Transverse colon (tissue), 4 donors: ENCODE measurements at regions of chr20 and their contacts with region 1.

Region 1: DNA sequence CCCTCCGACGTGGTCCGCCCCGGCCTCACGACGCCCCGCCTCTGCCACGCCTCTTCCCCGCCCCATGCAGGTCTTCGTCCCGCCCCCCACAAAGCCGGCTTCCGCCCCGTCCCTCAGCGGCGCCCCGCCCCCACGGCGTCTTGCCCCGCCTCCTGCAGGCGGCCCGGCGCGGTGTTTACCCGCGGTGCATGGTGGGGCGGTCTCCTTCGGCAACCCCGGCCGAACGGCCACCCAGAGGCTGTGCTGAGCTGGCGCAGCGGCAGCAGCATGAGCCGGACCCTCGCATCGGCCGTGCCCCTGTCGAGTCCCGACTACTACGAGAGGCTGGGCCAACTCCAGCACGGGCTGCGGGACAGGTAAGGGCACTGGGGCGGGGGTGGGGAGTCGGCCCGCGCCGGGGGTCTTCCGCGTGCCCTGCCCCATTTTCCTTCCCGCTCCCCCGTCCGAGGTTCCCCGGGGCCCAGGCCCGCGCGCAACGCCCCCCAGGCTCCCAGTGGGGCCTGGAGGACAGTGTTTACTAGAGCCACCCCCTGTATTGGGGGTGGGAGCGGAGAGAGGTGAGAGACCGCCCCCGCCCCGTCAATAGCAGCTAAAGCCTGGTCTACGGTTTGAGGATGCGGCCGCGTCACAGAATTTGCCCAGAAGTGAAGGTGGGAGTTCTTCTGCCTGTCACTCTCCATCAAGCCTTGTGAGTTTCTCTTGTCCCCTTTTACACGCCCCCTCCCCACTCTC is at the start of gene KIZ:
- DNase-seq: peak; percentile 99
- H3K4me3 ChIP-seq: peak within 1 kb of the TSS; percentile 66 to 98 (median 91)
- H3K27ac ChIP-seq: peak within 1 kb of the TSS; percentile 87 to 92 (median 88)
- H3K4me1 ChIP-seq: peaks cover 0 to 26% (median 9%) of the 10 kb centered on the region in 4 donors
- H3K27me3 ChIP-seq: no peaks in the 10 kb centered on the region
- CTCF ChIP-seq: peak; percentile 28 to 75 (median 42)
- EP300 ChIP-seq: no peak
- POLR2A ChIP-seq: peak; percentile 82
- total RNA-seq, gene KIZ: 24.3 to 95.9 (median 36.9) TPM

Region 2: DNA sequence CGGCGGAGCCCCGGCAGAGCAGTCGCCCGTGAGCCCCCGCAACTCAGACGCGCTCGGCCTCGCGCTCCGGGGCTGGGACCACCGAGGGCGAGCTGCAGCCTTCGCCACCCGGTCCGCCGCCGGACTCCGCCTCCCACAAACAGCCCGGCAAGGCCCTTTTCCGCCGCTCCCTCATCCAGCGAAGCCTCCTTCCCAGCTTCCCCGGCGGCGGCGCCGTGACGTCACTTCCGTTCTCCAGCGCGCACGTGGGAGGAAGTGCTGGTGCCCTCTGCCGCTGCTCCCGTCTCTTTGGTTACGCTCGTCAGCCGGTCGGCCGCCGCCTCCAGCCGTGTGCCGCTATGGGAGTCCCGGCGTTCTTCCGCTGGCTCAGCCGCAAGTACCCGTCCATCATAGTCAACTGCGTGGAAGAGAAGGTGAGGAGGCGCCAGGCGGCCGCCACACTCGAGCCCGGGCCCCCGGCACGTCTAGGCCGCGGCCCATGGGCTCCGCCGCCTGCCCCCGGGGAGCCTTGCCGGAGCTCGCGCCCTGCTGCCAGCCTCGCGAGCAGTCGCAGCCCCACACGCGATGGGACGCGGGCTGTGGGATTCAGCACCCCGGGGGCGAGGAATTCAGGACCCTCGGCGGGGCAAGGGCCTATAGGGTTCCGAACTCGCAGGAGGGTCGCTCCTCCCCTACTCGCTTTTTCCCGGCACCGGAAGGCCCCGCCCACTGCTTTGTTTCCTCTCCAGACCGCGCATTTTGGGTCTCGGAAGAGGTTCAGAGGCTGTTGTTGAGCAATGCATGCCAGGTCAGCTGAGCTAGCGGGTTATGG is 177.3 kb after region 1 on chr20 and contains the start of gene XRN2:
- in situ Hi-C with region 1: no loop called
- intact Hi-C with region 1: loop called (anchors 10 kb)
- DNase-seq: peak; percentile 97
- H3K4me3 ChIP-seq: peak within 1 kb of the TSS; percentile 75 to 98 (median 80)
- H3K27ac ChIP-seq: peak within 1 kb of the TSS; percentile 94 to 98 (median 97)
- H3K4me1 ChIP-seq: peaks cover 6 to 20% (median 15%) of the 10 kb centered on the region in 4 donors
- H3K27me3 ChIP-seq: no peaks in the 10 kb centered on the region
- CTCF ChIP-seq: no peak
- EP300 ChIP-seq: no peak
- POLR2A ChIP-seq: peak; percentile 89
- total RNA-seq, gene XRN2: 16.1 to 46.4 (median 30.3) TPM

Region 3: GRCh38 chr20:21677731-21678130 is 551.7 kb after region 1 on chr20:
- in situ Hi-C with region 1: no loop called
- intact Hi-C with region 1: no loop called
- DNase-seq: no peak
- H3K4me3 ChIP-seq: no peak overlapping the region
- H3K27ac ChIP-seq: no peak overlapping the region
- H3K4me1 ChIP-seq: no peaks in the 10 kb centered on the region
- H3K27me3 ChIP-seq: no peaks in the 10 kb centered on the region
- CTCF ChIP-seq: no peak
- EP300 ChIP-seq: no peak
- POLR2A ChIP-seq: no peak